ENCODE measurements at regions of chr11 and their contacts with region 1.

Region 1: GRCh38 chr11:92018332-92018731 is 206.3 kb upstream of the FAT3 start:
- DNase-seq: no peak
- ATAC-seq: no peak
- H3K4me3 ChIP-seq: no peak overlapping the region
- H3K27ac ChIP-seq: no peak overlapping the region
- H3K4me1 ChIP-seq: no peaks in the 10 kb centered on the region
- H3K27me3 ChIP-seq: no peaks in the 10 kb centered on the region
- CTCF ChIP-seq: no peak
- POLR2A ChIP-seq: no peak

Region 2: DNA sequence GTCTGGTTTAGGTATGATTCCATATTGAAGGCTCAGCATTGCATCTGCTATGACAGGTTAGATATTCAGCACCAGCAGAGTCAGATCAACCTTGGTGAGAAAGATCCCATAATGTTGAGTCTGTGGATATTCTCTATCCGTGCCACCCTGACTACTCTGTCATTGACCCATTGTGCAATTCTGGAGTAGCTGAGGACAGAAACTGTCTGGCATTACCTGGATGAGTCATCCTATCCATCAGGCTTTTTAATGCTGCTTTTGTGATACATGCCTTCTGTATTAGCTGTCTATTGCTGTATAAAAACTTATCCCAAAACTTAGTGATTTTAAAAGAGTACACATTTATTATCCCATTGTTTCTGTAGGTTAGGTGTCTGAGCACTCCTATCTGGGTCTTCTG is 17.2 kb after region 1 on chr11:
- in situ Hi-C with region 1: no loop called
- intact Hi-C with region 1: loop called (anchors 2 kb)
- DNase-seq: no peak
- ATAC-seq: no peak
- H3K4me3 ChIP-seq: no peak overlapping the region
- H3K27ac ChIP-seq: no peak overlapping the region
- H3K4me1 ChIP-seq: no peaks in the 10 kb centered on the region
- H3K27me3 ChIP-seq: no peaks in the 10 kb centered on the region
- CTCF ChIP-seq: no peak
- POLR2A ChIP-seq: no peak

Measured in gastrocnemius medialis (tissue), 4 donors.